Right ventricle myocardium superior (tissue), 1 donor: ENCODE measurements at regions of chr1 and their contacts with region 1.

Region 1: GRCh38 chr1:150561974-150562445 is 12.8 kb downstream of the ADAMTSL4 start:
- DNase-seq: peak; percentile 97
- ATAC-seq: peak; percentile 87

Region 2: DNA sequence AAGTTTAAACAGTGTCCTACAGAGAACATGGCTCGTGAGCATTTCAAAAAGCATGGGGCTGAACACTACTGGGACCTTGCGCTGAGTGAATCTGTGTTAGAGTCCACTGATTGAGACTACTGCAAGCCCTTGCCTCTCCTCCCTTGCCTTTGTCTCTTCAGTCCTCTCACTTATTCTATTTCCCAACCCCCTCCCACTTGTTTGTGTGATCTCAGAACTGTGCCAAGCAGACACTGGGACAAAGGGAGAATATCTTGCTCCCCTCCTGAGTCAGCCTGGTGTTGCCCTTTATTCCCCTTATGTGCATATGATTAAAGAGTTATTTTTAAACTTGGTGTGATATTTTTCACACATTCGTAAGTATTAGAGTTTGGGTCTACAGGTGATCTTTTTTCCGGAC is 209.1 kb before region 1 on chr1:
- intact Hi-C with region 1: no loop called
- DNase-seq: no peak
- ATAC-seq: no peak

Region 3: DNA sequence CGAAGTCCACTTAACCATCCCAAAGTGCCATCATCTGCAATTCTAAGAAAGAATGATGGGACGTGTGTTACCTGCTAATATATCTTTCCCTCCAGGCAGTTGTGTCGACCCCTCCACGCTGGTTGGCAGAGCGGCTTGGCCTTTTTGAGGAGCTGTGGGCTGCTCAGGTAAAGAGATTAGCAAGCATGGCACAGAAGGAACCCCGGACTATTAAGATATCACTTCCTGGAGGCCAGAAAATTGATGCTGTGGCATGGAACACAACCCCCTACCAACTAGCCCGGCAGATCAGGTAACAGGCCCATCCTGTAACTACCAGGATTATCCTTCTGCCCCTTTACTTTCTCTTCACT is 74.3 kb before region 1 on chr1:
- intact Hi-C with region 1: no loop called
- DNase-seq: no peak
- ATAC-seq: no peak

Region 4: DNA sequence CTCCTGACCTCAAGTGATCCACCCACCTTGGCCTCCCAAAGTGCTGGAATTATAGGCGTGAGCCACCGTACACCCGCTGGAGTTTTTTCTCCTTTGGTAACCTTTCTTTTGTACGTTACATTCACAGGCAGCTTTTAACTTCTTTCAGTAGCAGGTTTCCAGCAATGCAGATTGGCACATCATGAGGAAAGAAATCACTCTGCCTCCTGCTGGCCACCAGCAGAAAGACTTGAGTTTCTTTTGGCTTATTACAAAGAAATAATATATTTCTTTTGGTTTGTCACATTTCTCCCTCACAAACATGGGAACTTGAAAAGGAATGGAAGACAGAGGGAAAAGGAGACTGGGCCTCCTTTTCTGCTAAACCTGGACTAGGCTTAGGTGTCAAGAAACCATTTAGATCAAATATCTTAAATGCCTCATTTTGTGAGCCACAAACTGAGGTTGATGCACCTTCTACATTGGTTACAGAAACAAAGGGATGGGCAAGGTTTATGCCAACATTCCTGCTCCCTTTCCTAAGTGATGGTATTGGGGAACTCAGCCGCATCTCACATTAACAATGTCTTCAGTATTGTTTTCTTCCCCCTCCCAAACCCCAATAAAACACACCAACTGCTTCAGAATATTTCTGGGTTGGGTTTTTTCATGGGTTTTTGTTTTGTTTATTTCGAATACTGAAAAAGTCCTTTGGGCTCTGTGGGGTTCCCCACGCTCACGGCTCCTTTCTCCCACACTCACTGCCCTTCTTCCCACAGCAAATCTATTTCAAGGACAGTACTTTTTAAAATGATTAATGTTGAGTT is 59.7 kb after region 1 on chr1:
- intact Hi-C with region 1: loop called (anchors 2 kb)
- DNase-seq: no peak
- ATAC-seq: peak; percentile 39

Region 5: DNA sequence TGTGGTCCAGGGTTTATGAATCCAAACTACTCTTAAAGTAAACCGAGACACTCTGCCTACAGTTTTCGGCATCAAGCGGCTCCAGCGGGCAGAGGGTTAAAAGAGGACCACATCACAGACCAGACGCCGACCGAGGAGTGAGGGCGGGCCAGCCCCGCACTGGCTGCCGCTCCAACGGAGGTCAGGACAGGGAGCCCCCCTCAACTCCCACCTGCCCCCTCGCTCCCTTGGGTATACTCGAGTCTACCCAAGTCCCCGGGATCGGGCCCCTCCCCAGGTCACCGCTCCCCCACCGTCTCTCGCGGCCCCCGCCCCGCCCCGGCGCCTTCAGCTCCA is 314.1 kb after region 1 on chr1:
- intact Hi-C with region 1: no loop called
- DNase-seq: no peak
- ATAC-seq: peak; percentile 72

Region 6: DNA sequence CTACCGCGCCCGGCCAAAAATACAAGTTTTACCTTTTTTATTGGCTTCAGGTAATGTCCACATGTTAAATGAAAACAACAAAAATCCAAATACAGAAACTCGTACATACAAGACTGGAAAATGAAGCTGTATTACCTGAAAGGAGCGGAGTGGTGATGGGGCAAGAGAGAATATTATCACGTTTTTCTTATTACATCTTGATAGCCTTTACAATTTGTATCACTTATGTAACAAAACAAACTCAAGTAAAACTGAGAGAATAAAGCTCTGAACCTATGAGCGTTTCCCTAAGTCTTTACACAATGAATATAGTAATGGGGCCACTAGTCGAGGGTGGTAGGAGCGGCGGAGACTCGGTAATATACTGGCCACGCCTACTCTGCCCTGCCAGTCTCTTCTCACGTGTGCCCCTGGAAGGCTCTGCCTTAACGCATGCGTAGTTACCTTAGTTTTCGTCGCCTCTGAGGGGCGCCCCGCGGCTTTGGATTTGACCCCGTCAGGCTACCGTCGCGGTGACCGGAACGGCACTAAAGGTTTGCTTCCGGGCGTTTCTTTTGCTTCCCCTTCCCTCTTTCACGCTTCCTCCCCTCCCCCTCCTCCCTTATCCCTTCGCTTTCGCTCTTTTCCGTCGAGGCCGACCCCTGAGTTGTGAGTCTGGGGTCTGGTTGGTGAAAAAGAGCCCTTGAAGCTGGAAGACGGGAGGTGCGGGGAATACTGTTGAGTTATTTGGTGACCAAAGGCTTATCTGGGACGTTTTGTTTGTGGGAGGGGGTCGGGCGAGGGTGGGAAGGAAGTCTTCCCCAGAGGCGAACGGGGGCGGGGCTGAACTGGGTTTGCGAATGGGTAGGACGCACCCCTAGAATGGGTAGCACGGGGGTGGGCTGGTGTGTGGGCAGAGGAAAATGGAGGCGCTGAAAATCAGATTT is 364.1 kb after region 1 on chr1 and contains the start of gene SETDB1:
- intact Hi-C with region 1: loop called (anchors 5 kb)
- DNase-seq: peak; percentile 96
- ATAC-seq: peak; percentile 98
- total RNA-seq, gene SETDB1: 15.7 TPM